Kidney (tissue), 22 donors: ENCODE measurements at regions of chr21 and their contacts with region 1.

Region 1: GRCh38 chr21:42258153-42258884 is 39.4 kb downstream of the ABCG1 start:
- DNase-seq: peak; percentile 55 to 85 (median 60)
- H3K4me3 ChIP-seq: no peak overlapping the region
- H3K27ac ChIP-seq: no peak overlapping the region
- H3K4me1 ChIP-seq: peaks cover 0 to 10% (median 6%) of the 10 kb centered on the region in 3 donors
- H3K27me3 ChIP-seq: no peaks in the 10 kb centered on the region
- CTCF ChIP-seq: peak; percentile 88

Region 2: DNA sequence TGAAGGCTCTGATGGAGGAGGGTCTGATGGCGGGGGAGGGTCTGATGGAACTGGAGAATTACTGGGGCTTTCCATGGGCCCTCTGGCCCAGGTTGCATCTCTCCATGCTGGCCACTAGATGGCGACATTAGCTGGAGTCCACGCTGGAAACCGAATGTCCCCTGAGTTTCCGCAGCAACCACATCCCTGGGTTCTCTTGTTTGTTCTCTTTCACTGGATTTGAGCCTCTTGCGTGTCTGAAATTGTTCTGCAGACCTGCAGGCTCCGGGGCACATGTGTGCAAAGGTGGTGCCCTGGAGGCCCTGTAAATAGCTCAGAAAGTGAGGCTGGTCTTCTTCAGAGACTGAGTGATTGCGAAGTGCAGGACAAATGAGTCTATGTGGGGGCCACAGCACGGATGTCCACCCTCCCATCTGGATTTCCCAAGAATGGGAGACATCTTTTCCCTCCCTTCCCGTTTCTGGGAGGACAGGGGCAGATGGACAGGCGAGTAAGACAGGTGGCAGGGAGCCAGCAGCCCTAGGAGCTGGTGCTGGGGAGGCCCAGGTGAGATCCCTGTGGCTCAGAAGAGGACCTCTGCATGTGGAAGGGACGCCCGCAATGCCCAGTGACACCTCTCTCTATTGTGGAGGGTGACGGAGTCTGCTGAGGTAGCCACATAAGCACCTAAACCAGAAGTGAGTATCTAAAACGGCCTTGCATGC is 112.6 kb before region 1 on chr21:
- intact Hi-C with region 1: loop called (anchors 5 kb)
- DNase-seq: peak in 4 of 5 donors; percentile 73 to 86 (median 80)
- H3K4me3 ChIP-seq: no peak overlapping the region
- H3K27ac ChIP-seq: no peak overlapping the region
- H3K4me1 ChIP-seq: peaks cover 0 to under 1% (median 0%) of the 10 kb centered on the region in 3 donors
- H3K27me3 ChIP-seq: no peaks in the 10 kb centered on the region
- CTCF ChIP-seq: peak; percentile 91